Prostate gland (tissue), 2 donors: ENCODE measurements at regions of chr5 and their contacts with region 1.

Region 1: DNA sequence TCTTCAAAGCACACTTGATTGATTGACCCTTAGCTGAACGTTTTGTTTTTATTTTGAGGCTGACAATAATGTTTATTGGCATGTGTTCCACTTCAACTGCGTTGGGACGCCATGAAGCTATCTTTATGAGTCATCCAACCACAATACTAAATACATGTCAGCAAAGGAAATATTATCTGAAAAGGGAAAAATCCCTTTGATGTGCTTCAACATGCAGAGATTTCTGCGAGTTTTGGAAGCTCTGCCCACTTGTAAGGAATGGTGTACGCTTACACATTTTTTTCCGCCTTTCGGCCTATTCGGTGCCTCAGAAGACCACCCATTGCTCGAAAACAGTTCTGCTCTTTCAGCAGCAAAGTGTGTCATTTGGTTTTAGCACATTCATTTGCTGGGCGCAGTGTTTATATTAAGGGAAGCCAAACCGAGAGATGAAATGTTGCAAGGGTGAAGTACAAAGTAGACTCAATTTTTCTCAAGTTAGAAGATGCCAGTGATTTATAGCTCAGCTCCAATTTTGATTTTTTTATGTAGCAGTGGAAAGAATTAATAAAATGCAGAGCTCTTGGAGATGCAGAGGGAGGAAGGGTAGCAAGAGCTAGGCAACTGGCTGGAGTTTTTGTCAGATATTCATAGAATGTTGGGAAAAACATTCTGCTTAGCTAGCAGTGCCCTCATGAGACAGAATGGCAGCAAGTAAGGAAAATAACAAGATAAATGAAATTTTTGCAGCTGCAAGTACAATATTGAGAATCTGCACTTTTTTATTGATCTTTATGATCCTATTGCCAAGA is 68.9 kb downstream of the PRDM6 start:
- DNase-seq: no peak
- H3K4me3 ChIP-seq: no peak overlapping the region
- H3K27ac ChIP-seq: peak overlapping the region in 1 of 2 donors; percentile 38
- H3K4me1 ChIP-seq: peaks cover 2% of the 10 kb centered on the region
- H3K27me3 ChIP-seq: no peaks in the 10 kb centered on the region
- CTCF ChIP-seq: no peak
- POLR2A ChIP-seq: no peak

Region 2: GRCh38 chr5:122896598-122897282 is 261.2 kb before region 1 on chr5:
- intact Hi-C with region 1: loop called (anchors 10 kb)
- DNase-seq: no peak
- H3K4me3 ChIP-seq: no peak overlapping the region
- H3K27ac ChIP-seq: no peak overlapping the region
- H3K4me1 ChIP-seq: no peaks in the 10 kb centered on the region
- H3K27me3 ChIP-seq: no peaks in the 10 kb centered on the region
- CTCF ChIP-seq: peak in 3 of 4 experiments; percentile 52 to 66 (median 52)
- POLR2A ChIP-seq: no peak